ENCODE measurements at regions of chr16 and their contacts with region 1.

Region 1: GRCh38 chr16:89602273-89602951 is 11.0 kb upstream of the DPEP1 start:
- DNase-seq: peak; percentile 41 to 44
- H3K4me3 ChIP-seq: peak overlapping the region; percentile 22; the same call in 1 of the 2 replicates
- H3K27ac ChIP-seq: no peak overlapping the region
- H3K4me1 ChIP-seq: peaks cover 16% of the 10 kb centered on the region; the same call in 1 of the 2 replicates
- H3K27me3 ChIP-seq: no peaks in the 10 kb centered on the region
- CTCF ChIP-seq: no peak

Region 2: GRCh38 chr16:88706288-88706964 is 896.0 kb before region 1 on chr16 and contains the starts of genes CTU2 and RNF166:
- CTCF ChIA-PET with region 1: no interaction called
- POLR2A ChIA-PET with region 1: no interaction called
- intact Hi-C with region 1: no loop called
- DNase-seq: peak; percentile 76 to 93
- H3K4me3 ChIP-seq: peak within 1 kb of the TSS; percentile 78
- H3K27ac ChIP-seq: no peak within 1 kb of the TSS
- H3K4me1 ChIP-seq: peaks cover 19% of the 10 kb centered on the region
- H3K27me3 ChIP-seq: no peaks in the 10 kb centered on the region
- CTCF ChIP-seq: no peak
- total RNA-seq, gene CTU2: 20.0 and 38.0 TPM in 2 replicates
- total RNA-seq, gene RNF166: 25.6 and 29.4 TPM in 2 replicates

Region 3: GRCh38 chr16:89268987-89269735 is 333.3 kb before region 1 on chr16:
- CTCF ChIA-PET with region 1: no interaction called
- POLR2A ChIA-PET with region 1: no interaction called
- intact Hi-C with region 1: no loop called
- DNase-seq: no peak
- H3K4me3 ChIP-seq: no peak overlapping the region
- H3K27ac ChIP-seq: no peak overlapping the region
- H3K4me1 ChIP-seq: no peaks in the 10 kb centered on the region
- H3K27me3 ChIP-seq: no peaks in the 10 kb centered on the region
- CTCF ChIP-seq: no peak

Region 4: DNA sequence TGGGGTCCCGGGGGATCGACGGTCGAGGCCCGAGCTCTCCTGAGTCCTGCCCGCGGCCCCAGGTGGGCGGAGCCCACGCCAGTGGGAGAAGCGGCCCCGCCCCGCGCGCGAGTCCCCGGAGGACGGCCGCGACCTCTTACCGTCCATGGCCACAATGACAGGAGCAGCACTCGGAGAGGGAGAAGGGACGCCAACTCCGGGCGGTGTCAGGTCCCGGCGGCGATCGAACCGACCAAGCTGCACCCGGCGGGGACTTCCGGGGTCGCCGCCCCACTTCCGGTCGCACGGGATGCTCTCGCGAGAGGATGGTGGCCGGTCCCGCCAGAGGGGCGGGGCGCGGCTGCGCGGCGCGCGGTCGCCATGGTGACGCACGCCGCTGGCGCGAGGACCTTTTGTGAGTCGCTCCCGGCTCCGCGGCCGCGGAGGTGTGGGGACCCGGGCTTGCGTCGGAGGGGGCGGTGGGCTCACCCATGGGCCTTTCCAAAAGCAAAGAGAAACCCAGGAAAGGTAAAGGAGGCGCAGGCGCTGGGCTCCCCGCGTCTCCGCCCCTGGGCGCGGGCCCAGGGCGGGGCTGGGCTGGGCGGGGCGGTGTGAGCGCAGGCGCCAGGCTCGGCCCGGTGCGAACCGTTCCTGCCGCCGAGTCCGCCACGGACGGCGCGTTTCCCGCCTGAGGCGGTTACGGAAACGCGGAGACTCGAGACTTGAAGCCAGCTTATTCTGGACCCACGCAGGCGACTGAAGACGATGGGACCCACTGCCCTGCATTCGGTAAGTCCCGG is 55.2 kb after region 1 on chr16 and contains the starts of genes CHMP1A and SPATA33:
- CTCF ChIA-PET with region 1: interaction called, 12 read pairs
- POLR2A ChIA-PET with region 1: no interaction called
- intact Hi-C with region 1: no loop called
- DNase-seq: peak; percentile 66 to 95
- H3K4me3 ChIP-seq: peak within 1 kb of the TSS; percentile 93
- H3K27ac ChIP-seq: no peak within 1 kb of the TSS
- H3K4me1 ChIP-seq: peaks cover 18% of the 10 kb centered on the region
- H3K27me3 ChIP-seq: no peaks in the 10 kb centered on the region
- CTCF ChIP-seq: no peak
- total RNA-seq, gene CHMP1A: 151 and 237 TPM in 2 replicates
- total RNA-seq, gene SPATA33: 21.0 and 25.6 TPM in 2 replicates

Region 5: DNA sequence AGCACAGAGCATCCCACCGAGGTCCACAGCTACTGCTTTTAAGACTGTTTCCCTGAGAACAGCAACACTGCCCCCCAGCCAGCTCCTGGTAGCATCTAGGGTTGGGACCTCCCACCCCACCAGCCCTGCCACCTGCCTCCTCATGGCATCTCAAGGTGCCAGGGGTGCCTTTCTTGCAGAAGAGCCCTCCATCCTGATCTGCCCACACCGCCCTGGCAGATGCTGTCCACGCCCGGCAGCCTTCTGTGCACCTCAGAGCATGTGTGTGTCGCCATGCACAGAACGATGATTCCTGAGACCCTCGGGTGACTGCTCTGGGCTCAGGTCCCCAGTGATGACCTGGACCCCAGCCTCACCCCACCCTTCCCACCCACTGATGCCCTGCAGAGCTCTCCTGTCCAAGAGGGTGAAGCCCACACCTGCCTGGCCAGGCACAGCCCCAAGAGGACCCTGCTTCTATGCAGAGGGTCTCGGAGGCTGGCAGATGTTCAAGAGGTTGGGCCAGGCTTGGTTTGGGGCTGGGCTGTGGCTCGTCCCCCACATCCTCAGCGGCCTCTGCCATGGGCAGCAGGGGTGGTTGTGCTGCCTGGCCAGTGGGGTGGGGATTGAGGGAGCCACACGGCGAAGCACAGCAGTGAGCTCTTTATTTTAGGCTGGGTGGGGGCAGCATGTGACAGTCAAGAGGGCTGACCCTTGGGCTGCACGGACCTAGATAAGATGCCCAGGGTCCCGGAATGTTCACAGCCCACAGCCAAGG is 104.3 kb after region 1 on chr16:
- CTCF ChIA-PET with region 1: interaction called, 11 read pairs
- POLR2A ChIA-PET with region 1: no interaction called
- intact Hi-C with region 1: no loop called
- DNase-seq: no peak
- H3K4me3 ChIP-seq: no peak overlapping the region
- H3K27ac ChIP-seq: no peak overlapping the region
- H3K4me1 ChIP-seq: no peaks in the 10 kb centered on the region; the same call in 1 of the 2 replicates
- H3K27me3 ChIP-seq: no peaks in the 10 kb centered on the region
- CTCF ChIP-seq: no peak

Region 6: GRCh38 chr16:89880477-89881367 is 278.3 kb after region 1 on chr16:
- CTCF ChIA-PET with region 1: no interaction called
- POLR2A ChIA-PET with region 1: interaction called, 24 read pairs
- intact Hi-C with region 1: no loop called
- DNase-seq: no peak
- H3K4me3 ChIP-seq: no peak overlapping the region
- H3K27ac ChIP-seq: no peak overlapping the region
- H3K4me1 ChIP-seq: no peaks in the 10 kb centered on the region
- H3K27me3 ChIP-seq: no peaks in the 10 kb centered on the region
- CTCF ChIP-seq: no peak

Measured in PC-9 (cell line).